Left lung (tissue), 14 donors: ENCODE measurements at regions of chr7 and their contacts with region 1.

Region 1: DNA sequence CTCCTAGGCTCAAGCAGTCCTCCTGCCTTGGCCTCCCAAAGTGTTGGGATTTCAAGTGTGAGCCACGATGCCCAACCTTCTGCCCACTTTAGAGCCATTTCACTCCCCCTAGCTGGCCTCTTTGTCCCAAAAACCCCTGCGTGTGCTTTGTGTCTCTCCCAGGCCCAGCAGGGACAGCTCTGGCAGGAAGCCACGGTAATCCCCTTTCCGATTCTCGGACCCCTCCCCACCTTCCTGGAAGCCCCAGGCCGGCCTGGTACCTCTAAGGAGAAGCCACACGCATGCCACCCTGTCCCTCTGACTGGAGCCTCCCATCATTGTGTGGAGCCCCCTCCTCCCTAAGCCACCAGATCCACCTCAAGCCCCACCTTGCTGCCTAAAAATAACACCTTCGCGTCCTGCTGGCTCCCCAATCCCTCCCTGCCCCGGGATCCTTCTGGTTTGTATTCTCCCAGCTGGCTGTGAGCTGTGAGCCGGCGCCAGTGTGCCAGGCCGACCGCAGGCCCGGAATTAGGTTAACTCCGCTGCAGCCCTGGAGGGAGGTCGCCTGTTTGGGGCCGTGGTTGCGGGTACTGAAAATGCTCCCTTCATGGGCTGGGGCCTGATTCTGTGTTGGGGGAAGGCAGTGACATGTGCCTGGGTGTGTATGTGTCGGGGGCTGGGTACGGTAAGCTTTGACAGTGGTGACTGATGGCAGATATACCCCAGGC is 16.4 kb upstream of the SRRM3 start:
- DNase-seq: no peak
- ATAC-seq: no peak
- H3K4me3 ChIP-seq: no peak overlapping the region
- H3K27ac ChIP-seq: no peak overlapping the region
- H3K4me1 ChIP-seq: no peaks in the 10 kb centered on the region
- H3K27me3 ChIP-seq: no peaks in the 10 kb centered on the region
- CTCF ChIP-seq: no peak

Region 2: DNA sequence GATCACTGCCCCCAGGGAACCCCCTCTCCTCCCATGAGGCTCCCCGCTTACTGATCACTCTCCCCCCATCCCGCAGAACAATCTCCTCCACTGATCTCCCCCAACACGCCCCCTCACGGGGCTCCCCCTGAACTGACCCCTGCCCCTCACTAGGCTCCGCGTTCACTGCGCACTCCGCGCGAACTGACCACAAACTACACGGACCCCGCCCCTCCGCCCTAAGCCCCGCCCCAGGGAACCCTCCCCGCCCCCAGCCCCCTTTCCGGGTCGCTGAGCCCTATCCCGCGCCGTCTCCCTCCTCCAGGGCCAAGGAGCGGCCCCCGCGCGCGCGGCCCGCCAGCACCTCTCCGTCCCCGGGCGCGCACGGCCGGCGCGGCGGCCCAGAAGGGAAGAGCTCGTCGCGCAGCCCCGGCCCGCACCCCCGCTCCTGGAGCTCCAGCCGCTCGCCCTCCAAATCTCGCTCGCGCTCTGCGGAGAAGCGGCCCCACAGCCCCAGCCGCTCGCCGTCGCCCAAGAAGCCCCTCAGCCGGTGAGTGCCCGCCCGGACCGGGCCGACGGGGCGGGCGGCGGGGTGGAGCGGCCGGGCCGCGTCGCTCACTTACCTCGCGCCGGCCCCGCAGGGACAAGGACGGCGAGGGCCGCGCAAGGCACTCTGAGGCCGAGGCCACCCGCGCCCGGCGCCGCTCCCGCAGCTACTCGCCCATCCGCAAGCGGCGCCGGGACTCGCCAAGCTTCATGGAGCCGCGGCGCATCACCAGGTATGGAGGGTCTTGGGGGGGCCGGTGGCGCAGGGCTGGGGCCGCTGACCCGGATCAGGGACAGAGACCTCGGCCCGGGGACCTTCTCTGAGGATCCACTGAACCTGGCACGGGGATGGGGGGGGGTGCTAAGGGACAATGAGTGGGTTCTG is 97.3 kb after region 1 on chr7:
- intact Hi-C with region 1: loop called in 1 of 2 experiments (anchors 10 kb)
- DNase-seq: peak in 1 of 4 donors; percentile 80
- ATAC-seq: peak; percentile 48
- H3K4me3 ChIP-seq: peak overlapping the region; percentile 24 to 36
- H3K27ac ChIP-seq: no peak overlapping the region
- H3K4me1 ChIP-seq: peaks cover 0 to 20% of the 10 kb centered on the region in 2 donors
- H3K27me3 ChIP-seq: peaks cover 0 to 80% of the 10 kb centered on the region in 2 donors
- CTCF ChIP-seq: no peak